Prostate gland (tissue), 2 donors: ENCODE measurements at regions of chr1 and their contacts with region 1.

Region 1: DNA sequence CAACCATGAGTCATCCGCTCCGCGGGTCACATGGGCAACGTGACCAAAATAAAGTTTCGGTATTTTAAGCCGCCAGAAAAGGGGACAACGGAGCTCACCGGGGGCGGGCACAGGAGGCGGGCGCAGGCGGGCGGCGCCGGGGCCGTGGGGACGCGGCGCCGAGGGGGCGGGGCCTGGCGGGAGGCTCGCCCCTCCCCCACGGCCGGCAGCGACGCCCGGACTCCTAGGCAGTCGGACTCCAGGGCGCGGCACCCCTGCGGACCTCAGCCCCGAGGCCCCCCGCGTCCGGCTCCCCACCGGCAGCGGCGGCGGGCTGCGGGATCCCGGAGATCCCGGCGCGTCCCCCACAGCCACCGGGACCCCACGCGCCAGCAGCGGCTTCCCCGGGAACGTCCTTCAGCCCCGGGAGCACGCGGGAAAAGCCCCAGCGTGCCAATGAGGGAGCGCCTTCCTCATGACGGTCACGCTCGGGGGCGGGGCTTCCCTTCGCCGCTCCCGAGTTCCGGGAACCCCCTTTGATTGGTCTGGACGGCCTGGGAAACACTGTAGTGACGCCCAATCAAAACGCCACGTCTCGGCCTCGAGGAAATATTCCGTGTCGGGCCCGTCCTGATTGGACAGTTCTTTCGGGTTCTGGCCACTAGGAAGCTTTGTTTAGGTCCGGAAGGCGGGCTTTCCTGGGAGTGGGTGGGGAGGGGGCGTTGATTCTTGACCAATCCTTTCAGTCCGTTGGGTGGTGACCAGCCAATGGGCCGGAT is 515 bp upstream of the CAMTA1 start:
- DNase-seq: peak; percentile 100
- H3K4me3 ChIP-seq: peak overlapping the region; percentile 67 to 87
- H3K27ac ChIP-seq: peak overlapping the region; percentile 98 to 99
- H3K4me1 ChIP-seq: peaks cover 5% of the 10 kb centered on the region
- H3K27me3 ChIP-seq: no peaks in the 10 kb centered on the region
- CTCF ChIP-seq: peak in 1 of 4 experiments; percentile 4
- POLR2A ChIP-seq: peak; percentile 90

Region 2: DNA sequence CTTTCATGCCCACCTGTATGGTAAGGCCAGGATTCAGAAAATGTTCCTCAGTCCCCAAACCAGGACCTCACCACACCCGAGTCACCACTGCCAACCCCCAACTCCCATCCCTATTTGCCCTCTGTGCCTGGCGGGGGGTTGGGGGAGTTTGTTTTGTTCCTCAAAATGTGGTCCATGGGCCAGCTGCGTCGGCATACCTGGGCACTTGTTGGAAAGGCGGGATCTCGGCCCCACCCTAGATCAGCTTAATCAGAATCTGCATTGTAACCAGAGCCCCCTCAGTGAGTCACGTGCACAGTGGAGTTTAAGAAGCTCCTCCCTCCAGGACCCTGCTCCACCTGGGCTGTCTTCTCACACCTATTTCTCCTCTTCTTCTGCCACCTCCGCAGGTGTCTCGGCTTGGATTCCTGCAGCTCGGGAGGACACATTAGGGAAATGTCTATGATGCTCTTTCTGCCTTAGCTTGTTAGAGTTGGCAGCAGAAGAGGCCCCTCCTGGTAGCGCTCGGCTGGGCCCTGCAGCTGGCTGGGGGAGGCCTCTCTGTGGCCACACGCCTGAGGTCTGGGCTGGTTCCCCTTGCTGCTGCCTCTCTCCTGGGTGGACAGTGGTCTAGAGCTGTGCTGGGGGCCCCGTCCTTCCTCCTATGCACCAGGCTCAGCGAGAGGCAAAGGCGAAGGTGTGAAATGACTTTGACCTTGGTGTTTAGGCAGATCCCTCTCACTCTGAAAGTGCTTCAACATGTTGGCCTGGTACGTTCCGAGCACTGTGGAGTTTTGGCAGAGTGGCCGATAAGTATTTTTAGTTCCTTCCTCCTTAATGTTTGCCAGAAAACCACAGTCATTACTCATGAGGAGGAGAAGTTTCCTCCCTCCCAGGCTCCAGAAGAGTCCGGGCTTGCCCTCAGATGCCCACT is 41.3 kb before region 1 on chr1:
- intact Hi-C with region 1: loop called (anchors 5 kb)
- DNase-seq: peak; percentile 78
- H3K4me3 ChIP-seq: no peak overlapping the region
- H3K27ac ChIP-seq: peak overlapping the region; percentile 77 to 82
- H3K4me1 ChIP-seq: peaks cover 2% of the 10 kb centered on the region
- H3K27me3 ChIP-seq: no peaks in the 10 kb centered on the region
- CTCF ChIP-seq: no peak
- POLR2A ChIP-seq: no peak